ENCODE measurements at regions of chr12 and their contacts with region 1.

Region 1: GRCh38 chr12:47397664-47398281 is 308.1 kb downstream of the RPAP3 start:
- DNase-seq: peak; percentile 64
- ATAC-seq: peak; percentile 62
- H3K4me3 Mint-ChIP-seq: no peak overlapping the region
- H3K27ac Mint-ChIP-seq: peak overlapping the region; percentile 100
- H3K4me1 Mint-ChIP-seq: peaks cover 96% of the 10 kb centered on the region
- H3K27me3 Mint-ChIP-seq: no peaks in the 10 kb centered on the region

Region 2: GRCh38 chr12:46627686-46628085 is 770.1 kb before region 1 on chr12:
- CTCF ChIA-PET with region 1: no interaction called
- POLR2A ChIA-PET with region 1: interaction called, 10 read pairs
- intact Hi-C with region 1: no loop called
- DNase-seq: no peak
- ATAC-seq: no peak
- H3K4me3 Mint-ChIP-seq: no peak overlapping the region
- H3K27ac Mint-ChIP-seq: no peak overlapping the region
- H3K4me1 Mint-ChIP-seq: peaks cover 2% of the 10 kb centered on the region
- H3K27me3 Mint-ChIP-seq: no peaks in the 10 kb centered on the region

Region 3: GRCh38 chr12:47085815-47086252 is 311.9 kb before region 1 on chr12:
- CTCF ChIA-PET with region 1: interaction called, 11 read pairs
- POLR2A ChIA-PET with region 1: interaction called, 8 read pairs
- intact Hi-C with region 1: loop called (anchors 2 to 5 kb)
- DNase-seq: peak; percentile 58
- ATAC-seq: peak; percentile 82
- H3K4me3 Mint-ChIP-seq: no peak overlapping the region
- H3K27ac Mint-ChIP-seq: peak overlapping the region; percentile 30
- H3K4me1 Mint-ChIP-seq: peaks cover 60% of the 10 kb centered on the region
- H3K27me3 Mint-ChIP-seq: no peaks in the 10 kb centered on the region

Region 4: DNA sequence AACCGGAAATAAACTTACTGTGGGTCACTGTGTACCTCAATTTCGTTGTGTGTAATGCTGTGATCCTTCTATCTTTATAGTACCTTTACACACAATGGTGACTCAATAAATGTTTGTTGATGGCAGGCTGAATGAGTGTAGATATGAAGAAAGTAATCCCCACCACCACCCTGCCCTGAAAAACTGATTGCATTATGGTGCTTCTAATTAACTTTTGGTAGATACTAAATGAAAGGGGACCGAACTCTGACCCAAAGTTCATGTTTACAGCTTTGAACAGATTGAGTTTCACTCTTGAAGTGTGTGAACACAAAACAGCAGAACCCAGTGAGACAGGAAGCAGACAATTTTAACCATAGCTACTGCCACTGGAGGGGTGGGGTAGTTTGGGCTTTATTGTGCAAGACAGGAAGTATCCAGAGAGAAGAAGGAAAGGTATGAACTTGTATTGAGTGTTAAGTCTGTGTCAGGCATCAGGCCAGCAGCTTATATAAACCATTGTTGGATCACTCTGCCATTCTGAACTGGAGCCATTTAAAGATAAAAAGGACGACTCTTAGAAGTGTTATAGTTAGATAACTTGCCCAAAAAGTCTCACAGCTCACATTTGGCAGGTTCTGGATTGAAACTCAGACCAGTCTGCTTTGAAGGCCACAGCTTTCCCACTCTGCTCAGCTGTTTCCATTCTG is 121.0 kb before region 1 on chr12:
- CTCF ChIA-PET with region 1: interaction called, 12 read pairs
- POLR2A ChIA-PET with region 1: no interaction called
- intact Hi-C with region 1: loop called in 1 of 2 experiments (anchors 1 kb)
- DNase-seq: peak; percentile 69
- ATAC-seq: peak; percentile 77
- H3K4me3 Mint-ChIP-seq: peak overlapping the region; percentile 12
- H3K27ac Mint-ChIP-seq: peak overlapping the region; percentile 88
- H3K4me1 Mint-ChIP-seq: peaks cover 87% of the 10 kb centered on the region
- H3K27me3 Mint-ChIP-seq: no peaks in the 10 kb centered on the region

Region 5: DNA sequence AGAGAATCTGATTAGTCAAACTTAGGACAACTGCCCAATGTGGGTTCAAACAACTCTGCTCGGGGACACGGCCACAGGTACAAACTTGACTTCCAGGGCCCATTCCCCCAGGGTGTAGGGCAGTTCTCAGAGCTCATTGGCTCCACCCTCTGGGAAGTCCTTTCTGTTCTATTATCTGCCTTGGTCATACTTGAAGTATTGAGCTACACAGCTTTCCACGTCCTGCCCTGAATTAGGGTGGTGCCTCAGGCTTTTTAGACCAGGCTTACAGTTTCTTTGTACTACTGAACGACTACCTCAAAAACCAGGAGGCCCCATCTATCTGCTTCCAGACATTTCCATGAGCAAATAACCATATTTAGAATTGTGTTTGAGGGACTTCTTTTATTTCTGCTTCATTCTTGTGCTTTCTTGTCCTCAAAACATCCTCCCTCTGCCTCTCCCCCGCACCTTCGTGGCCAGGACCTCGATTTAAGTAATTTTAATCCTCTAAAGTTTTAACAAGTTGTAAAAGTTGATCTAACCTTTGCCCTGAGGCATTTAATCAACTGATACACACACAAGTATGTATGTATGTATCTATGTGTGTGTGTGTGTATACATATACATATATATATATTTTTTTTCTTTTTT is 36.3 kb before region 1 on chr12:
- CTCF ChIA-PET with region 1: interaction called, 12 read pairs
- POLR2A ChIA-PET with region 1: interaction called, 4 read pairs
- intact Hi-C with region 1: loop called in 1 of 2 experiments (anchors 1 kb)
- DNase-seq: peak; percentile 70
- ATAC-seq: peak; percentile 82
- H3K4me3 Mint-ChIP-seq: peak overlapping the region; percentile 74
- H3K27ac Mint-ChIP-seq: peak overlapping the region; percentile 99
- H3K4me1 Mint-ChIP-seq: peaks cover 62% of the 10 kb centered on the region
- H3K27me3 Mint-ChIP-seq: no peaks in the 10 kb centered on the region

Region 6: DNA sequence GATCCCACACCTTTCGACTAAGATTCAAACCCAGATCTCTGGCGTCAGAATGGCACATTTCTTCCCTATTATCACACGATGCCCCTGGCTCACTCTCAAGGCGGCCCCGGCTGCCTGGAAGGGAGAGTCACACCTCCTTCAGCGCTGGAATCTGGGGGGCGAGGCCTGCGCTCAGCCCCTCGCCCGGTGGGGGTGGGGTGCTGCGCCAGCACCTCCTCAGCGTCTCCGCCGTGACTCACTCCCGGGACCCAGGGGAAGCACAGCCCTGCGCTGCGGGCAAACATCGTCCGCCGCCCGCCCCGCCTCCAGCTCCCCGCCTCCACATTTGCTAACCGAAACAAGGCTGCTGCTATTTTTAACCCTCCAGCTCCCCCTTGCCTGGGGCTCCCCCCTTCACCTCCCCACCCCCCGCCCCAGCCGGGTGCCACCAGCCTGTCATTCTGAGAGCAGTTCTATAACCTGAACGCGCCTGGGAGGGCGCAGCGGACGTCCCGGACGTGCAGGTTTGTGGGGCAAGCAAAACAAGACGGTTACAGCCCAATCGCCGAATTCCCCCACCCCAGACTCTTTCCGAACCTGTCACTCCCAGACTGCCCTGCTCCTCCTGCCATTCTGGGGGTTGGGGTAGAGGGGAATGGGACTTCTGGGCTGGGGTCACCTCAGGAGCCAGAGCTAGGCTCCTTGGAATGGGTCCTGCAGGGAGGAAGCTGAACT is 415.2 kb after region 1 on chr12:
- CTCF ChIA-PET with region 1: no interaction called
- POLR2A ChIA-PET with region 1: no interaction called
- intact Hi-C with region 1: loop called (anchors 10 kb)
- DNase-seq: peak; percentile 98
- ATAC-seq: peak; percentile 59
- H3K4me3 Mint-ChIP-seq: peak overlapping the region; percentile 94
- H3K27ac Mint-ChIP-seq: peak overlapping the region; percentile 98
- H3K4me1 Mint-ChIP-seq: peaks cover 81% of the 10 kb centered on the region
- H3K27me3 Mint-ChIP-seq: no peaks in the 10 kb centered on the region

Measured in activated CD4-positive, alpha-beta T cell treated with anti-CD3 and anti-CD28 coated beads for 36 hours (primary cell).